Right ventricle myocardium superior (tissue), 1 donor: ENCODE measurements at regions of chr17 and their contacts with region 1.

Region 1: GRCh38 chr17:67221062-67221998 is 23.7 kb downstream of the HELZ start:
- DNase-seq: no peak
- ATAC-seq: peak; percentile 74

Region 2: GRCh38 chr17:67293251-67294203 is 72.2 kb after region 1 on chr17:
- intact Hi-C with region 1: loop called (anchors 5 kb)
- DNase-seq: peak; percentile 81
- ATAC-seq: peak; percentile 78